Common myeloid progenitor, CD34-positive (primary cell): ENCODE measurements at regions of chr3 and their contacts with region 1.

Region 1: DNA sequence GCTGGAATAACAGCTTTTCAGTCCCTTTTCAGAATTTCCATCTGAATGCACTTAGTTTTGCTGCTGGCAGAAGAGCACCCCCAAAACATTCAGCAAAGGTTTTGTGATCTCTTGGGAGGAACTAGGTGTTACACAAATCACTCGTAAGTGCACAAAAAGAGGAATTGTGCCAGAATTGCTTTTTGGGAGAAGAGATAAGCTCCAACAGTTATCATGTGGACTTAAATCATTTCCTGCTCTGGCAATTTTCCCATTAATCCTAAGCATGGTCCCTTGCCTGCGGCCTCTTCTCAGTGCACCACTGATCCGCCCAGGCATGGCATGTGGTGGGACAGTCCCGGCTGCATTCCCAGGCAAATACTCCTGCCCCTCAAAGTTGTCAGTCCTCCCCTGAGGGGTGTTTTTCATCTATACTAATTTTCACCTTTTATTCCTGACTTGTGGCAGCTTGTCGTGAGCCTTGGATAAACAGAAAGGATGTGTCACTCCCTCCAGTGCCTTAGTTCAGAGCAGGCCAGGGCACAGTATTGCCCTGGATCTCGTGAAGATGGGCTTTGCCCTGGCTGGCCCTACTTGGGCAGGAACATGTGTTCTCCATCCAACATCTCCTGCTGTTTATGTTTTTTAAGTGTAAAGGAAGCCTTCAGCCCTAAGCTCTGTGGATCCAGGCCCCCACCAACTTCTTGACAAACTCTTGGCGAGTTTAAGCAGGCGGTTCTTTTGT is 44.6 kb upstream of the VILL start:
- DNase-seq: peak in 2 of 3 donors; percentile 47 to 54
- H3K4me3 ChIP-seq: peak overlapping the region in 2 of 7 experiments; percentile 11 to 66
- H3K27ac ChIP-seq: peak overlapping the region in 1 of 2 experiments; percentile 1
- H3K4me1 ChIP-seq: peaks cover 6 to 37% (median 24%) of the 10 kb centered on the region in 4 experiments
- H3K27me3 ChIP-seq: no peaks in the 10 kb centered on the region

Region 2: GRCh38 chr3:37872413-37873160 is 73.4 kb before region 1 on chr3:
- CTCF ChIA-PET with region 1: no interaction called
- POLR2A ChIA-PET with region 1: no interaction called
- DNase-seq: no peak
- H3K4me3 ChIP-seq: no peak overlapping the region
- H3K27ac ChIP-seq: no peak overlapping the region
- H3K4me1 ChIP-seq: no peaks in the 10 kb centered on the region
- H3K27me3 ChIP-seq: no peaks in the 10 kb centered on the region

Region 3: GRCh38 chr3:37956723-37957528 is 11.0 kb after region 1 on chr3:
- CTCF ChIA-PET with region 1: interaction called, 11 read pairs
- POLR2A ChIA-PET with region 1: interaction called, 5 read pairs
- DNase-seq: peak in 2 of 3 donors; percentile 38 to 47
- H3K4me3 ChIP-seq: peak overlapping the region in 4 of 7 experiments; percentile 7 to 54 (median 36)
- H3K27ac ChIP-seq: peak overlapping the region; percentile 58 to 78
- H3K4me1 ChIP-seq: peaks cover 17 to 63% (median 40%) of the 10 kb centered on the region in 4 experiments
- H3K27me3 ChIP-seq: no peaks in the 10 kb centered on the region